ENCODE measurements at regions of chr6 and their contacts with region 1.

Region 1: GRCh38 chr6:166989427-166990032 is 9.7 kb upstream of the CEP43 start:
- DNase-seq: no peak
- H3K4me3 ChIP-seq: no peak overlapping the region
- H3K27ac ChIP-seq: no peak overlapping the region
- H3K4me1 ChIP-seq: peaks cover 0 to 7% (median 0%) of the 10 kb centered on the region in 6 donors
- H3K27me3 ChIP-seq: no peaks in the 10 kb centered on the region
- CTCF ChIP-seq: peak in 10 of 11 experiments; percentile 25 to 69 (median 46)
- POLR2A ChIP-seq: no peak

Region 2: DNA sequence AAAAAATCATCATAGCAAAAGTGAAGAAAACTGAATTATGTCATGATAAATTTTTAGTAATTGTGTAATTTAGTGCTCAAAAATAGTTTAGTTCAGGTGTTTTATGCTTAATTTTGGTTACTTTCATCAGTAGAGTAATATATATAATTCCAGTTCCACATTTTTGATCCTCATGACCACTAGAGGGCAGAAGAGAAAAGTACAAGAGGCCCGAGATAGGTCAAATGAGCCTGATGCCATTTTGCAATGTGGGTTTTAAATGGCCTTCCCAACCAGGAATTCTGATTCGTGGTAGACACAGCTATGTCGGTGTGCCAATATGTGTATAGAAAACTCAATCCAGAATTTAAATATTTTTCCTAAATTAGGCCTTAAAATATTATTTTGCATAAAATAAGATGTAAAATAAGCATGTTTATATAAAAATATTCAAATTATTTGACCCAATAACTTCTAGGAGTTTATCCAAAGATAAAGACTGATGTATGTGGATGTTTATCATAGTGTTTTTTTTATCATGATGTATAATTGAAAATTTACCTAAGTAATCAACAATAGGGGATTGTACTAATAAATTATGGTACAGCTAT is 202.7 kb before region 1 on chr6:
- intact Hi-C with region 1: loop called (anchors 10 kb)
- DNase-seq: no peak
- H3K4me3 ChIP-seq: no peak overlapping the region
- H3K27ac ChIP-seq: no peak overlapping the region
- H3K4me1 ChIP-seq: no peaks in the 10 kb centered on the region
- H3K27me3 ChIP-seq: no peaks in the 10 kb centered on the region
- CTCF ChIP-seq: peak; percentile 12 to 78 (median 68)
- POLR2A ChIP-seq: no peak

Region 3: DNA sequence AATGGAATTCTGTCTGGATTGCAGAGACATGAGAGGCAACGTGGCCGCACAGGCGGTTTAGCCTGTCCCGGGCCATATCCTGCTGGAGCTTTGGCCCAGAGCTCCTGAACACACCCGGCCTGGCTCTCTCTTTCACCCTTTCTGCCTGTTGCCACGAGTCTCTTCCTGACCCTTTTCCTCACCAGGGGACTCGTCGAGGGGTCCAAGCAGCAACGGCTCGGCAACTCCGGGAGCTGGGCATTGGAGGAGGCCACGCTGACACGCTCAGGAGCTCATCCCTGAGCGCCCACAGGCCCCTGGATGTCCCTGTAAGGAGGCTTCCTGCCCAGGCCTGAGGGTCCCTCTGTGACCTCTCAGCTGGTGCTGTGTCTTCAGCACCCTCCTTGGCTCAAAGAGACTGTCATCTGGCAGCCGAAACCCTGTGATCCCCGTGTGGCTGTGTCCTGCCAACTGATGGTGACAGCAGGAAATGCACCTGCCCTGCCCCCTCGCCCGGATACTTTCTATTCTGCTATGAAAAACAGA is 137.0 kb before region 1 on chr6:
- intact Hi-C with region 1: no loop called
- DNase-seq: no peak
- H3K4me3 ChIP-seq: no peak overlapping the region
- H3K27ac ChIP-seq: no peak overlapping the region
- H3K4me1 ChIP-seq: peaks cover 0 to 17% (median 0%) of the 10 kb centered on the region in 6 donors
- H3K27me3 ChIP-seq: no peaks in the 10 kb centered on the region
- CTCF ChIP-seq: peak in 2 of 11 experiments; percentile 9 to 27
- POLR2A ChIP-seq: no peak